ENCODE measurements at regions of chr6 and their contacts with region 1.

Region 1: DNA sequence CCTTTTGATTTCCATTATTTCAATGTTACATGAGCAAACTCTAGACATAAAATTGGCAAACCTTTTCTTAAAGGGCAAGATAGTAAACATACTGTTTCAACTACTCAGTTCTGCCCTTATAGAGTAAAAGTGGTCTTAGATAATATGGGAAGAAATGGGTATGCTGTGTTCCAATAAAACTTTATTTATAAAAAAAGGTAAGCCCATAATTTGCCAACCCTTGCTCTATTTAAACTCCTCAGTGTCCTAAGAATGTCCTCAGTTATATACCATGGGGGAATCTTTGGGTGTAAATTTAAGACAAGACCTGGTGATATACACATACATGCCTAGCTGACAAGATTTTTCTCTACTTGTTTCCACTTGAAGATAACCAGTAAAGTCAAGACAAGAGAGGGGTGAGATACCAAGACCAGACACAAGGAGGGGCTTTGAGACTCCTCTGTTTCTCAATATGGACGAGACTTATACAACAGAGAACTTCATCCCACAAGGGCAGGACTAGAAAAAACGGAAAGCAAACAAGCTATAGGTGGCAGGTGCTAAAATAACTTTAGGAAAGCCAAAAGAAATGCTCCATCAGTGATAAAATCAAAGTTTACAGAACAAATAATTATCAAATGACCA is 10.5 kb downstream of the SNX3 start:
- DNase-seq: no peak
- CTCF ChIP-seq: no peak

Region 2: DNA sequence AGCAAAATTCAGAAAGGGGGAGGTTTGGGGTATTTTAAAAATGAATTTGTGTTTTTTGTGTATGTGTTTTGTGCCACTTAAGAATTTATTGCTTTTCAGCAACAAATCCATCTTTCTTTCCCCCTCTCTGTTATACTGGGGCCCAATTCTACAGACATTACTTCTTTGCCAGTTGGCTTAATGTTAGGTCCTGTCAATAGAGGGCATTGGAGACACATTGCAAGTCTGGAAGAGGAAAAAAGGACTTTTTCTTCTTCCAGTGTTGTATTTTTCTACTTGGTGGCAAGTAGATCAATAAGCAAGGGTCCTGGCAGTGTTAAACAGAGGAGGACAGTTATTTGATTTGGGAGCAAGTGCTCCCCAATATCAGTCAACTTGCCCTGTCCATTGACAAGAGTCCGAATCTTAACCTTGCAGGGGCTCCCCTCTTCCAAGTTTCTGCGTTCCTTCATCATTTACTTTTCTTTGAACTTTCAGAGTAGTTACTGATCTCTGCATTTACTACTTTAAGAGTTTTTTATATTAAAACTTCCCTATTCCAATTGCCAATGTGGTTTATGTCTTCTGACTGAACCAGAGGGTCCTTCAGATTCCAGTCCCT is 449.7 kb before region 1 on chr6:
- in situ Hi-C with region 1: no loop called
- DNase-seq: no peak
- CTCF ChIP-seq: no peak

Region 3: DNA sequence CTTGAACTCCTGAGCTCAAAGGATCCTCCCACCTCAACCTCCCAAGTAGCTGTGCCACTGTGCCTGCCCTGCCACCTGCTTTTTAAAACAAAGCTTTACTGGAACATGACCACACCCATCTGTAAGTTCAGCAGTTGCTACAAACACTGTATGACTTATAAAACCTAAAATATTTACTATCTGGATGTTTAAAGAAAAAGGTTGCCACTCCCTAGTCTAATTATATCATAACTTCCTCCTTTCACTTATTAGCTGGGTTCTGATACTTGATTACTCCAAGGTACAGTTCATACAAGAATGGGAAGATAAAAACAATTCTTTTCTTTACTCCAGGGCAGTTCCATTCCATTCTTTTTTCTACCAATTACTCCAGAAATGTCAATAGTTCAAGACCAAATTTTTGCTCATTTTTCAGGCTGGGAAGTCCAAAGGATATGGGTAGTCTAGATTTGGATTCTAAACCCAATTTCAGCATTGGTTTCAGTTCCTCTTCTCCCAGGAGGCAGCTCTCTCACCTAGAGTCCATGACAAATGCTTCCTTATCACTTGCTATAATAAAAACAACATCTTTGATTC is 355.4 kb before region 1 on chr6:
- in situ Hi-C with region 1: no loop called
- DNase-seq: no peak
- CTCF ChIP-seq: no peak

Region 4: GRCh38 chr6:108484016-108484415 is 233.7 kb after region 1 on chr6:
- in situ Hi-C with region 1: loop called (anchors 10 kb)
- DNase-seq: no peak
- CTCF ChIP-seq: no peak

Region 5: DNA sequence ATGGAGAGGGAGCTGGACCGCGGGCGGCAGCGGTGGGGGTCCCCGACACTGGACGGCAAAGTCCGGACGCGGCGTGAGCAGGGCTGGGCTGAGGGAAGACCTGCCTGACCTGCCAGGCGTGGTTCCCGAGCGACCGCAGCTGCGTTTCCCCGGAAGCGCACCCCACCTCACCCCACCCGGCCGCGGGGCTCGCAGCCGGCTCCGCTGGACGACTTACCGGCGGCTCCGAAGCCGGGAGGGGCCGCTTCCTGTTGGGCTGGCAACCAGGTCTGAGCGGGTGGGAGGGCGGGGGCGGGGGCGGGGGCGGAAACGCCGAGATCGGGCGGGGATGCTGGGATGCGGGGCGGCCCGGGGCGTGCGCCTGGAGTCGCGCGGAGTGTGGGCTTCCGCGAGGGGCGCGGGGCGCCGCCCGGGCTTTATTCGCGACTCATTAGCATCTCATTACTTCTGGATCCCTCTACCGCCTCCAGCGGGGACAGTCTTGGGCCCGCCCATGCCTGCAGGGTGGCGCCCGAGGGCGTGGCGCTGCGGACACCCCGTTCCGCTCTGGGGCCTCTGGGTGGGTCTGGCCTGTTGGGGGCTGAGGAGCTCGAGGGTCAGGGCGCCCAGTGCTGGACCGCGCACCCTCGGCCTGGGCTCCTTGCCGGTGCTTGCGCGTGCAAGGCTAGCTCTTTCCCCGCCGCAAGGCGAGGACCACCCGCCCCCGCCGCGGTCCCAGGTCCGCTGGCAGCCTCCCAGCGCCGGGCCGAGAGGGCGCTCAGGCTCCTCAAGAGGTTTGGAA is 1205.3 kb after region 1 on chr6 and contains the start of gene MICAL1:
- in situ Hi-C with region 1: no loop called
- DNase-seq: peak; percentile 85
- CTCF ChIP-seq: peak; percentile 9

Measured in GM13976 (cell line).